ENCODE measurements at regions of chr19 and their contacts with region 1.

Region 1: GRCh38 chr19:588093-588740 is 1.5 kb upstream of the HCN2 start:
- DNase-seq: peak; percentile 64 to 95 (median 91)
- H3K4me3 ChIP-seq: peak overlapping the region in 54 of 59 donors; percentile 1 to 66 (median 44)
- H3K27ac ChIP-seq: peak overlapping the region; percentile 64 to 98 (median 95)
- H3K27me3 ChIP-seq: peaks cover 0 to 14% (median 0%) of the 10 kb centered on the region in 45 donors
- CTCF ChIP-seq: peak; percentile 44 to 87 (median 72)

Region 2: DNA sequence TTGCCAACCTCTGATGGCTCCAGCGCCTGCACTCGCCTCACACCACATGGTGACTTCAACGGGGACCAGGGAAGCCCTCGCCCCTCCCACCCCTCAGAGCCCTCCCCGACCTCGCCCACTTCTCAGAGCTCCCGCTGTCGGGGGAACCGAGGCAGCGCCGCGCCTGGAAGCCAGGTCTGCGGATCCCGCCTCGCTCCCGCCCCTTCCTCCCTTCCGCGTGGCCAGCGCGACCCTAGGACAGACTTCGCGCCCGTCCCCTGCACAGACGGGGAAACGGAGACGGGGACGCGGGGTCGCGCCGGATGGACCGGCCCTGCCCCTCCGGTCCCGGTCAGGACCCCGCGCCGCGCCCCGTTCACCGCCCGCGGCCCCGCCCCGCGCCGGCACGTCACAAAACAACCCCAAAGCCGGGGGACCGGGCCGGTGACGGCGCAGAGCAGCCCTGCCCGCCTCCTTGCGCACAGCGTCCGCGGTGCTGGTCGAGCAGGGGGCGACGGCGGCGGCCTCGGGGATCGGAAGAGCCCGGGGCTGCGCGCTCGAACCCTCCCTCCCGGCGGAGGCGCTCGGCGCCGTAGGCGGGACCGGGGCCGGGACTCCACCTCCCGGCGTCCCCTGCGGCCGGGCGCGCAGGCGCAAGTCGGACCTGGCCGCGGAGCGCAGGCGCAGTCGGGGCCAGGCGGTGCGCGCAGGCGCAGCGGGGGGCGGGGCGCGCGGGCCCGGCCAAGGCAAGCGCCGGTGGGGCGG is 57.0 kb before region 1 on chr19:
- intact Hi-C with region 1: loop called in 1 of 2 experiments (anchors 5 kb)
- DNase-seq: peak in 8 of 10 donors; percentile 46 to 91 (median 60)
- H3K4me3 ChIP-seq: peak overlapping the region; percentile 63 to 99 (median 92)
- H3K27ac ChIP-seq: peak overlapping the region; percentile 71 to 99 (median 94)
- H3K27me3 ChIP-seq: no peaks in the 10 kb centered on the region
- CTCF ChIP-seq: peak in 9 of 56 donors; percentile 8 to 41 (median 18)

Region 3: DNA sequence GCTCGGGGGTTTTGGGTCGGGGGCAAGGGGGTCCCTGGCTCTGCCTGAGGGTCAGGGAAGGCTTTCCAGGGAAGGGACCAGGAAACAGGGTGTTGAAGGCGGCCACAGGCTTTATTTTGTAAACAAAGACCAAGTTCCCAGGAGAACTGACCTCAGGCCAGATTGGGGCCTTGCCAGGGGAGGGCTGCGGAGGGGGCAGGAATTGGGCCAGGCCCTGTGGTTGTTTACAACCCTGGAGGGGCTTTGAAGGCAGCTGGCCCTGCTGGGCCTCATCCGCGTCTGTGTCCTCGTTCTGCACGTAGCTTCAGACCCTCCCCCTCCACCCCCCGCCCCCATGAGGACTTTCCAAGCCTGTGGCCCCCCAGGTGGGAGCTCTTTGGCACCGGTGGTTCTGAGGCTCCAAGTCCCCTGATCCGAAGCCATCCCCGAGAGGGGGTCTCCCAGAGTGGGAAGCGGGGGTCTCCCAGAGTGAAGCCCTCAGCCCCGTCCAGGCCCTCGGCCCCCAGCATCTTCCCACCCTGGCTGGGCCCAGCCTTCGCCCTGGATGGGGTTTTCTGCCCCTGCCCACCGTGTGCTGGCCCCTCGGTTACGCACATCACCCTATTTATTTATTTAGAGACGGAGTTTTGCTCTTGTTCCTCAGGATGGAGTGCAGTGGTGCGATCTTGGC is 29.3 kb before region 1 on chr19:
- intact Hi-C with region 1: no loop called
- DNase-seq: no peak
- H3K4me3 ChIP-seq: no peak overlapping the region
- H3K27ac ChIP-seq: peak overlapping the region in 37 of 59 donors; percentile 6 to 84 (median 59)
- H3K27me3 ChIP-seq: no peaks in the 10 kb centered on the region
- CTCF ChIP-seq: no peak

Region 4: DNA sequence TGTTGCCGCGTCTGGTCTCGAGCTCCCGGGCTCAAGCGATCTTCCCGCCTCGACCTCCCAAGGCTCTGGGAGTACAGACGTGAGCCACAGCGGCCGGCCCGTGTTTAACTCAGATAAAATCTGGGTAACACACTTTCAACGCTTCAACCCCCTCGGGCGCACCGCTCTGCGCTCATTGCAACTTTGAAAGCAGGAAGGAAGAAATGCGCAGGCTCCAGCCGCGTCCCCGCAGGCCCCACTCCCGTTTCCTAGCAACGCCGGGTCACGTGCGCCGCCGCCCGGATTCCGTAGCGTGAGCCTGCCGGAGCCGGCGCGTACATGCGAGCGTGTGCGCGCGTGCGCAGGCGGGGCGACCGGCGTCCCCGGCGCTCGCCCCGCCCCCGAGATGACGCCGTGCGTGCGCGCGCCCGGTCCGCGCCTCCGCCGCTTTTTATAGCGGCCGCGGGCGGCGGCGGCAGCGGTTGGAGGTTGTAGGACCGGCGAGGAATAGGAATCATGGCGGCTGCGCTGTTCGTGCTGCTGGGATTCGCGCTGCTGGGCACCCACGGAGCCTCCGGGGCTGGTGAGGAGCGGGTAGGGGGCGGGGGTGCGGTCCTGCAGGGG is 16.0 kb before region 1 on chr19 and contains the start of gene BSG:
- intact Hi-C with region 1: no loop called
- DNase-seq: peak; percentile 94 to 99 (median 97)
- H3K4me3 ChIP-seq: peak within 1 kb of the TSS; percentile 69 to 100 (median 97)
- H3K27ac ChIP-seq: peak within 1 kb of the TSS; percentile 28 to 98 (median 91)
- H3K27me3 ChIP-seq: peaks cover 0 to 4% (median 0%) of the 10 kb centered on the region in 45 donors
- CTCF ChIP-seq: peak in 17 of 56 donors; percentile 2 to 38 (median 21)
- total RNA-seq, gene BSG: 350 to 867 (median 549) TPM

Region 5: GRCh38 chr19:628159-628558 is 39.9 kb after region 1 on chr19:
- intact Hi-C with region 1: loop called (anchors 5 kb)
- DNase-seq: no peak
- H3K4me3 ChIP-seq: no peak overlapping the region
- H3K27ac ChIP-seq: peak overlapping the region in 3 of 59 donors; percentile 25 to 27 (median 26)
- H3K27me3 ChIP-seq: no peaks in the 10 kb centered on the region
- CTCF ChIP-seq: peak in 41 of 56 donors; percentile 13 to 48 (median 29)

Region 6: DNA sequence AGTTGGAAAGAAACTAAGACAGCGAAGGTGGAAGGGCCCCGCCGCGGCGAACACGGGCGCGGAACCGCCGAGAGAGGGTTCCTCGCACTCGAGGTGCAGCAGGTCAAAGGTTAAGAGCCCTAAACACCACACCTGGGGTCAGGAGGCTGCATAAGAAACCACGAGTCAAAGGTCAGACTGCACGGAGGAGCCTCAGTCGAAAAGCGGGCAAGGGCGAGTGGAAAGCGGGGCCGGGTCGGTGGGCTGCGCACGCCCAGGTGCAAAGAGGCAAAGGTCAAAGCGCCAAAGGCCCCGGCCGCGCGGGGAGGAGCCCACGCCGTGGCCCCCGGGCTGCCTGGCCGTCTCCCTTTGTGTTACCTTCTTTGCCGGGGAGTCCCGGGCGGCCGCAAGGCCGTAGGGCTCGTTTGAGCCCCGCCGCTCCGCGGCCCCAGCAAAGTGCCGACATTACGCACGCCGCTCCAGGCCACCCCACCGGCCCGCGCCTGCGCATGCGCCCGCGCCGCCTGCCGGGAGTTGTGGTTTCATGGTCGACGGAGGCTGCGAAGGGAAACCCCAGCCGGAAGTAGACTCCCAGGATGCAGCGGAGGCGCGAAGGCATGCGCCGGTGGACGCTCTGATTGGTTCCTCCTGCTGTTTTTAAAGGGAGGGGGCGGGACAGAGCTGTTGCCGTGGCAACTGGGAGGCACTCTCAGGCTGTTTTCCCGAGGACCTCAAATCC is 45.0 kb after region 1 on chr19 and contains the start of gene POLRMT:
- intact Hi-C with region 1: loop called (anchors 5 kb)
- DNase-seq: peak; percentile 95 to 98 (median 97)
- H3K4me3 ChIP-seq: peak within 1 kb of the TSS; percentile 58 to 100 (median 95)
- H3K27ac ChIP-seq: peak within 1 kb of the TSS in 52 of 59 donors; percentile 37 to 92 (median 76)
- H3K27me3 ChIP-seq: no peaks in the 10 kb centered on the region
- CTCF ChIP-seq: peak in 43 of 56 donors; percentile 9 to 67 (median 36)
- total RNA-seq, gene POLRMT: 27.8 to 91.2 (median 61.9) TPM

Region 7: GRCh38 chr19:728011-728410 is 139.8 kb after region 1 on chr19:
- intact Hi-C with region 1: loop called (anchors 5 to 10 kb)
- DNase-seq: no peak
- H3K4me3 ChIP-seq: no peak overlapping the region
- H3K27ac ChIP-seq: peak overlapping the region in 42 of 59 donors; percentile 17 to 83 (median 60)
- H3K27me3 ChIP-seq: no peaks in the 10 kb centered on the region
- CTCF ChIP-seq: no peak

Region 8: DNA sequence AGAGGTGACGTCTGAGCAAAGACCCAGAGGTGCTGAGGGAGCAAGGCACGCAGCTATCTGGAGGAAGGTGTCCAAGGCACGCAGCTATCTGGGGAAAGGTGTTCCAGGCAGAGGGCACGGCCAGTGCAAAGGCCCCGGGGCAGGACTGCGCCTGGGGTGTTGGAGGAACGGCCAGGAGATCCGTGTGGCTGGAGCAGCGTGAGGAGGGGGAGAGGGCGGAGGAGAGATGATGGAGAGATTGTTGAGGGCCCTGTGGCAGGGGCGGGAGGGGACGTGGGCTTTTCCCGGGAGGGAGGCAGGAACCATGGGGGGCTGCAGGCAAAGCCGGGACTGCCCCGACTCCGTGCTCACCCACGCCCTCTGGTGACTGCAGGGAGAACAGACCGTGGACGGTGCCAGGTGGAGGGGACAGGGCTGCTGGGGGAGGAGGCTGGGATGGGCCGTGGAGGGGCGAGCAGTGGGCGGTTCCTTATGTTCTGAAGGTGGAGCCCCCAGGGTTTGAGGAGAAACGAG is 149.4 kb after region 1 on chr19:
- intact Hi-C with region 1: loop called (anchors 5 to 10 kb)
- DNase-seq: peak in 3 of 10 donors; percentile 26 to 56 (median 45)
- H3K4me3 ChIP-seq: no peak overlapping the region
- H3K27ac ChIP-seq: peak overlapping the region in 1 of 59 donors; percentile 8
- H3K27me3 ChIP-seq: no peaks in the 10 kb centered on the region
- CTCF ChIP-seq: peak in 53 of 56 donors; percentile 32 to 64 (median 51)